Head of caudate nucleus (tissue), 42 donors: ENCODE measurements at regions of chr19 and their contacts with region 1.

Region 1: DNA sequence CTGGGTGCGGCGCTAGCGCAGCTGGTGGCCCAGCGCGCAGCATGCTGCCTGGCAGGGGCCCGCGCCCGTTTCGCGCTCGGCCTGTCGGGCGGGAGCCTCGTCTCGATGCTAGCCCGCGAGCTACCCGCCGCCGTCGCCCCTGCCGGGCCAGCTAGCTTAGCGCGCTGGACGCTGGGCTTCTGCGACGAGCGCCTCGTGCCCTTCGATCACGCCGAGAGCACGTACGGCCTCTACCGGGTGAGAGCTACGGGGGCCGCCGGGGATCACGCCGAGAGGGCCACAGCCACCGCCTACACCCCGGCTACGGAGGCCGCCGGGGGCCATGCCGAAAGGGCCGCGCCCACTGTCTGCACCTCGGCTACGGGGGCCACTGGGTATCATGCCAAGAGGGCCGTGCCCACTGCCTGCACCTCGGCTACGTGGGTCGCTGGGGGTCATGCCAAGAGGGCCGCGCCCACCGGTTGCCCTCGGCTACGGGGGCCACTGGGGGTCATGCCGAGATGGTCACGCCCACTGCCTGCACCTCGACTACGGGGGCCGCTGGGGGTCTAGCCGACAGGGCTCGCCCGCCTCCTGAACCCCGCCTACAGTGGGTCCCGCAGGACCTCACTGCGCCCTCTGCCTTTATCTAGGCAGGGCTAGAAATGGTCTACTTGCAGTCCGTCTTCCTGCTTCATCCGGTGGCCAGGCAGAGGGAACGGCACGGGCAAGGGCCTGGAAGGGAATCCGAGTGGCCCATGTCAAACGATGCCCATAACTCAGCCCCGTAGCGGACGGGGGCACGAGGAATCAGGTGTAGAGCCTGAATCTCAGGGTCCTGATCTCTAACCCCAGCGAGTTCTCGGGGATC is 500 bp downstream of the PGLS start:
- DNase-seq: peak; percentile 79 to 96 (median 90)

Region 2: GRCh38 chr19:17226002-17226933 is 285.7 kb before region 1 on chr19 and contains the start of gene OCEL1:
- intact Hi-C with region 1: no loop called
- DNase-seq: peak; percentile 97 to 100 (median 99)

Region 3: GRCh38 chr19:17470068-17470841 is 41.7 kb before region 1 on chr19 and contains the start of gene SLC27A1:
- intact Hi-C with region 1: loop called (anchors 5 kb)
- DNase-seq: peak; percentile 99 to 100 (median 100)